ENCODE measurements at regions of chrX and their contacts with region 1.

Region 1: GRCh38 chrX:20266810-20267606 is at the start of gene RPS6KA3:
- H3K4me3 Mint-ChIP-seq: peak within 1 kb of the TSS; percentile 94
- H3K27ac Mint-ChIP-seq: peak within 1 kb of the TSS; percentile 99
- H3K4me1 Mint-ChIP-seq: peaks cover 6% of the 10 kb centered on the region
- H3K27me3 Mint-ChIP-seq: no peaks in the 10 kb centered on the region

Region 2: DNA sequence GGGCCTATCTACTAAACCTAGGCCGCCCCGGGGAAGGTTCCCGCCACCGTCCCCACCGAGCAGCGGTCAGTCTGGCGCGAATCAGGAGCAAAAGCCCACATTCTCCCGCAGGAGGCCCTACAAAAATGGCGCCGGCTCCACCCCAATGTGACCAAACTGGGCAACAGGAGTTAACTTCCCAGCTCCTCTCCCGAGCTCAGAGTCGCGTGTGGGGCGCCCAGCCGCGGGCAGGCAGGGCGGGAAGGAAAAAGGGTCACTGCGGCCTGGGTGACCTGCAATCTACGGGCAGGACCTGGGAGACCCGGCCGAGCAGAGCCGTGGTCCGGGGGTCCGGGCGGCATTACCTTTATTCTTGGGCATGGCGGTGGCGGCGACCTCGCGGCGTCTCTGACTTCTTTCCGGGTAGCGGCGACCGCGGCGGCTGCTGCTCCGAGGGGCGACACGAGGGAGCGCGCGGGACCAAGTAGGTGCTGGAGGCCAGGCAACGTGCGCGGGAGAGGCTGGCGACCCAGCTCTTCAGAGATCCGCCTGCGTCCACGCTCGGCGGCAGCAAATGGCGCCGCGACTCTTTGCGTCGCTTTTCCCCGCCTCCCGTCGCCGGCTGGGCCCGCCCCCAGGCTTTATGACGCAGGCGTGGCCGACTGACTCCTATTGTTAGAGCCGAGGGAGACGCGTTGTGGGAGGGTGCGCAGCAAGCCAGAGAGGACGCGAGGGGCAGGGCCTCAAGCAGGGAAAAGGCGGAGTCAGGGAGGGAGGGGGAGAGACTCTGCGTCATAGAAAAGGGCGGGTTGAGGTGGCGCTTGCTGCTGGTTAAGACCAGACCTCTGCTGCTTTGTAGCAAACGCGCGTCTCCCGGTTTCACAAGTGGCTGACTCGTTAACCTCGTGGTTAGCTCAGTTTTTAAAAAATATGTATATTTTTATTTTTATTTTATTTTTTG is 125.5 kb before region 1 on chrX and contains the start of gene EIF1AX:
- intact Hi-C with region 1: loop called (anchors 5 kb)
- H3K4me3 Mint-ChIP-seq: peak within 1 kb of the TSS; percentile 85
- H3K27ac Mint-ChIP-seq: peak within 1 kb of the TSS; percentile 93
- H3K4me1 Mint-ChIP-seq: peaks cover 13% of the 10 kb centered on the region
- H3K27me3 Mint-ChIP-seq: no peaks in the 10 kb centered on the region

Region 3: DNA sequence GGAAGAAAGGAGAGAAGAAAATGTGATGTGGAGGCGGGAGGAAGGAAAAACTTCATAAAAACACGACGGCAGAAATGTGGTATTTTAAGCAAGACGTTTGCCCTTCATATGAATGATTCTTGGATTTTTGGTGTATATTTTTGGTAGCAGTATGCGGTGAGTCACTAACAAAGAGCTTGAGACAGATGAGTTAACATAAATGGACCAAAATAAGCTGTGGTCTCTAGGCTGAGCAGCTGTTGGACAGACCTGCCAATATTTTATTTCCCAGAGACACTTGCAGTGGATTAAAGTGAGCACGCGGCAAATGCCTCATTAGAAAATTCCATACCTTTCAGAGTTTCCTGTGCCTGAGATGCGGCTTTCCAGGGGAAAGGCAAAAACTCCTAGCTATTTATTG is 42.8 kb after region 1 on chrX:
- intact Hi-C with region 1: loop called (anchors 5 kb)
- H3K4me3 Mint-ChIP-seq: no peak overlapping the region
- H3K27ac Mint-ChIP-seq: no peak overlapping the region
- H3K4me1 Mint-ChIP-seq: peaks cover 37% of the 10 kb centered on the region
- H3K27me3 Mint-ChIP-seq: no peaks in the 10 kb centered on the region

Region 4: DNA sequence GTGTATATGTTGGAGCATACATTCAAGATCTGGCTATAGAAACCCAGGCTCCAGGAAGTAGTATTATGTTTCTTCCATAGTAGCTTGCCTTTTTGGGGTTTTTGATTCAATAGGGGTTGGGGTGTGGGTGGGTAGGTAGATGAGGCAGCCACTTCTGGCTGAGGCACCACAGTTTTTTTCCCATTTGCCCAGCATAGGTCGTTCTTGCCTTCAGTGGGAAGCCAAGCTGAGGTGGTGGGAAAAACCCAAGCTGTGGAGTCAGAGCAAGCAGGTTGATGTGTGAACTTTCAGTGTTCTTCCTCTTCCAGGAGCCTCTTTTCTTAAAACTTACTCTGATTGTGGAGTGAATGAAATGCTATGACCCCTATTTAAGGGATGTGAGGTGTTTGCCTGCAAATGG is 66.7 kb after region 1 on chrX:
- intact Hi-C with region 1: no loop called
- H3K4me3 Mint-ChIP-seq: no peak overlapping the region
- H3K27ac Mint-ChIP-seq: no peak overlapping the region
- H3K4me1 Mint-ChIP-seq: no peaks in the 10 kb centered on the region
- H3K27me3 Mint-ChIP-seq: no peaks in the 10 kb centered on the region

Region 5: GRCh38 chrX:20362268-20363267 is 95.6 kb after region 1 on chrX:
- intact Hi-C with region 1: loop called (anchors 5 kb)
- H3K4me3 Mint-ChIP-seq: peak overlapping the region; percentile 61
- H3K27ac Mint-ChIP-seq: peak overlapping the region; percentile 98
- H3K4me1 Mint-ChIP-seq: peaks cover 25% of the 10 kb centered on the region
- H3K27me3 Mint-ChIP-seq: no peaks in the 10 kb centered on the region

Region 6: DNA sequence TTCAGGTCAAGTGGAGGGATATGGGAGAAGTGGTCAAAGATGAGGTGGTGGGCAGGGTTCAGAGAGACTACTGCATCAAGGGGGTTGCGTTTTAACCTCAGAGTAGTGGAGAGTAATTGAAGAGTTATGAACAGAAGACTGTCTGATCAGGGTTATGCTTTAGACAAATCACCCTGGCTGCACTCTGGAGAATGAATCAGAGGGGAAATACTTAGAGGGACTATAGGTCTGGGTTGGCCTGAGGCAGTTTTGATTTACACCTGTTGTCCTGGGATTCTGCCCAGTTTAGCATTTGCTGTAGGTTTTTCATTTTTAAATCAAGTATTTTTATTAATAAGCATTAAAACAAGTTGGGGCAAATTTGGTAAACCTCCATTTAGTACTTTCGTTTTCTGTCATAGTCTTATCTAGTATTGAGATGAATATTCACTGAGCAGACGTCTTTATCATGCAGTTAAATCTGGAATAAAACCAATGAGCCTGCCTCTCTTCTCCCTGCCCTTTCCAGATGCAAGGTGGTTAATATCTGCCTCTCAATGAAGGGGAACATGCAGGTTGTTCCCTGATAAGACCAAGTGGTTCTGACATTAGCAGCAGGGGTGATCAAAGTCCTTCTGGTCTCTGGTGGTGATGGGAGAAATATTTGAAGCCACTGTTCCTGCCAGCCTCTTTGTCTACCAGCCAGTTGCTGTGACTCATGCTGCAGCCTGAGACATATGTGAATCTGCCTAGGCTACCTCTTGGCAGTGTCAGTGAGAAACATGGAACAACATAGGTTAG is 115.7 kb after region 1 on chrX:
- intact Hi-C with region 1: loop called (anchors 5 kb)
- H3K4me3 Mint-ChIP-seq: no peak overlapping the region
- H3K27ac Mint-ChIP-seq: no peak overlapping the region
- H3K4me1 Mint-ChIP-seq: no peaks in the 10 kb centered on the region
- H3K27me3 Mint-ChIP-seq: peaks cover 1% of the 10 kb centered on the region